ENCODE measurements at regions of chr9 and their contacts with region 1.

Region 1: GRCh38 chr9:125700791-125701190 is 6.2 kb downstream of the MAPKAP1 start:
- DNase-seq: peak; percentile 79
- ATAC-seq: peak; percentile 94
- H3K4me3 Mint-ChIP-seq: peak overlapping the region; percentile 3
- H3K27ac Mint-ChIP-seq: peak overlapping the region; percentile 57
- H3K4me1 Mint-ChIP-seq: peaks cover 65% of the 10 kb centered on the region
- H3K27me3 Mint-ChIP-seq: no peaks in the 10 kb centered on the region
- CTCF ChIP-seq: no peak

Region 2: GRCh38 chr9:125472926-125473701 is 227.7 kb before region 1 on chr9:
- CTCF ChIA-PET with region 1: no interaction called
- POLR2A ChIA-PET with region 1: no interaction called
- intact Hi-C with region 1: no loop called
- DNase-seq: no peak
- ATAC-seq: no peak
- H3K4me3 Mint-ChIP-seq: no peak overlapping the region
- H3K27ac Mint-ChIP-seq: no peak overlapping the region
- H3K4me1 Mint-ChIP-seq: no peaks in the 10 kb centered on the region
- H3K27me3 Mint-ChIP-seq: no peaks in the 10 kb centered on the region
- CTCF ChIP-seq: no peak

Region 3: DNA sequence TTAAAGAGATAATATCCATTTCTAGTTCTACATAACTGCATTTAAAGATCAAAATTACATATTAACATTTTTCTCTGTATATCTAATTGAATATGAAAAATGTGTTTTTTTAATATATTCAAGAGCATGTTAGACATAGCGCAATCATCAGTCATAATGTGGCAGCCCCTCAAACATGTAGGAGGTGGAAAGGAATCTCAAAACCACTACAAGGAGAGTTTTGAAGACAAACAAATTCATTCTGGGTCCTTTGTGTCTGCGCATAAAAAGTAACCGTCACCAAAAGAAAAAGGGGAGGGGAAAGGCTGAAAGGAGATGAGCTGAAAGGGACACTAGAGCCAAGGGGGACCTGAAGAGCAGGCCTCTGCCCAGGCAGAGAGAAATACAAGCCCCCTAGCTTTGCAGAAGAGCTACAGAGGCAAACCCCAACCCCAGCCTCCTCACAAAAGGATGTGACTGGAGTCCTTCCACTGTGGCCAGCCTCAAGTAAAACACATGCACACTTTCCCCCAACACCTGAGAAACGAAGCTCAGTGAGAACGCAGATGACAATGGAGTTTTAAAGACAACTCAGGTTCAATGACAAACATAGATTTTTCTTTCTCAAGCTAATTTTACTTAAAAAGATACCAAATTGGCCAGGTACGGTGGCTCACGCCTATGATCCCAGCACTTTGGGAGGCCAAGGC is 55.8 kb before region 1 on chr9:
- CTCF ChIA-PET with region 1: no interaction called
- POLR2A ChIA-PET with region 1: no interaction called
- intact Hi-C with region 1: loop called (anchors 2 kb)
- DNase-seq: peak; percentile 31
- ATAC-seq: peak; percentile 51
- H3K4me3 Mint-ChIP-seq: no peak overlapping the region
- H3K27ac Mint-ChIP-seq: peak overlapping the region; percentile 74
- H3K4me1 Mint-ChIP-seq: peaks cover 67% of the 10 kb centered on the region
- H3K27me3 Mint-ChIP-seq: no peaks in the 10 kb centered on the region
- CTCF ChIP-seq: no peak

Region 4: GRCh38 chr9:125690679-125691078 is 10.1 kb before region 1 on chr9:
- CTCF ChIA-PET with region 1: no interaction called
- POLR2A ChIA-PET with region 1: no interaction called
- intact Hi-C with region 1: no loop called
- DNase-seq: no peak
- ATAC-seq: no peak
- H3K4me3 Mint-ChIP-seq: no peak overlapping the region
- H3K27ac Mint-ChIP-seq: no peak overlapping the region
- H3K4me1 Mint-ChIP-seq: peaks cover 24% of the 10 kb centered on the region
- H3K27me3 Mint-ChIP-seq: no peaks in the 10 kb centered on the region
- CTCF ChIP-seq: no peak

Region 5: GRCh38 chr9:125758986-125759763 is 58.4 kb after region 1 on chr9:
- CTCF ChIA-PET with region 1: no interaction called
- POLR2A ChIA-PET with region 1: no interaction called
- intact Hi-C with region 1: no loop called
- DNase-seq: no peak
- ATAC-seq: no peak
- H3K4me3 Mint-ChIP-seq: peak overlapping the region; percentile 26
- H3K27ac Mint-ChIP-seq: no peak overlapping the region
- H3K4me1 Mint-ChIP-seq: peaks cover 20% of the 10 kb centered on the region
- H3K27me3 Mint-ChIP-seq: no peaks in the 10 kb centered on the region
- CTCF ChIP-seq: no peak

Region 6: DNA sequence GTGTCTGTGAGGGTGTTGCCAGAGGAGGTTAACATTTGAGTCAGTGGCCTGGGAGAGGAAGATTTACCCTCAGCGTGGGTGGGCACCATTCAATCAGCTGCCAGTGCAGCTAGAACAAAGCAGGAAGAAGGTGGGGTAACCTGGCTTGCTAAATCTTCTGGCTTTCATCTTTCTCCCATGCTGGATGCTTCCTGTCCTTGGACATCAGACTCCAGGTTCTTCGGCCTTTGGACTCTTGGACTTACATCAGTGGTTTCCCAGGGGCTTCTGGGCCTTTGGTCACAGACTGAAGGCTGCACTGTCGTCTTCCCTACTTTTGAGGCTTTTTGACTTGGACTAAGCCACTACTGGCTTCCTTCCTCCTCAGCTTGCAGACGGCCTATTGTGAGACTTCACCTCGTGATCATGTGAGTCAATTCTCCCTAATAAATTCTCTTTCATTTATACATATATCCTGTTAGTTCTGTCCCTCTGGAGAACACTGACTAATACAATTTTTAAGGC is 84.5 kb after region 1 on chr9:
- CTCF ChIA-PET with region 1: no interaction called
- POLR2A ChIA-PET with region 1: no interaction called
- intact Hi-C with region 1: no loop called
- DNase-seq: peak; percentile 77
- ATAC-seq: peak; percentile 89
- H3K4me3 Mint-ChIP-seq: peak overlapping the region; percentile 45
- H3K27ac Mint-ChIP-seq: peak overlapping the region; percentile 56
- H3K4me1 Mint-ChIP-seq: peaks cover 28% of the 10 kb centered on the region
- H3K27me3 Mint-ChIP-seq: no peaks in the 10 kb centered on the region
- CTCF ChIP-seq: no peak